H1 (cell line): ENCODE measurements at regions of chr5 and their contacts with region 1.

Region 1: GRCh38 chr5:38265546-38266179 is 7.3 kb downstream of the EGFLAM start:
- DNase-seq: peak in 1 of 2 experiments; percentile 91
- H3K4me3 ChIP-seq: 0 out of 8 replicates have a peak overlapping the region, but pooled peaks of 1 of the 4 experiments have one; percentile 27
- H3K27ac ChIP-seq: no peak overlapping the region
- H3K4me1 ChIP-seq: peaks cover 0 to 4% (median 0%) of the 10 kb centered on the region in 4 experiments; a peak in 1 of 7 replicates
- H3K27me3 ChIP-seq: peaks cover 0 to 20% (median 7%) of the 10 kb centered on the region in 4 experiments; a peak in 6 of 7 replicates
- CTCF ChIP-seq: peak; percentile 52 to 72 (median 69)
- EP300 ChIP-seq: no peak
- POLR2A ChIP-seq: no peak
- RAD21 ChIP-seq: peak; percentile 58 to 66

Region 2: GRCh38 chr5:38237681-38238080 is 28.0 kb before region 1 on chr5:
- CTCF ChIA-PET with region 1: interaction called, 10 read pairs
- POLR2A ChIA-PET with region 1: no interaction called
- DNase-seq: no peak
- H3K4me3 ChIP-seq: no peak overlapping the region
- H3K27ac ChIP-seq: no peak overlapping the region
- H3K4me1 ChIP-seq: no peaks in the 10 kb centered on the region
- H3K27me3 ChIP-seq: no peaks in the 10 kb centered on the region
- CTCF ChIP-seq: no peak
- EP300 ChIP-seq: no peak
- POLR2A ChIP-seq: no peak
- RAD21 ChIP-seq: no peak

Region 3: DNA sequence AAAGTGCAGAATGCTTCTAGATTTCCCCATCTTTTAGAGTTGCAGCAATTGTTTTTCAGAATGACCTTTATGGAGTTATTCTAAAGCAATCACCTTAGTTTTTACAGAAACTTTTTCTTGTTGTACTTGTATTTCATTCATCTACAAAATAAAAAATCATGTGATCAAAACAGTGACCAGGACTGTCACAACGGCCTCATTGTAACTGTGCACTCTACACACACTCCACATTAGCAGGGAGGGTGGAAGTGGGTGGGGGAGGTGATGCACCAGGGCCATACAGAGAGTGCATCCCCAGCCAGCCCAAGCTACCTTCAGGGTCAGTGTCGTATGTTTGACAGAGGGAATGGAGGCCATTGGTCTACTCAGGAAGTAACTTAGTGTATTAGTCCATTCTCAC is 19.6 kb after region 1 on chr5:
- CTCF ChIA-PET with region 1: interaction called, 24 read pairs
- POLR2A ChIA-PET with region 1: no interaction called
- DNase-seq: no peak
- H3K4me3 ChIP-seq: no peak overlapping the region
- H3K27ac ChIP-seq: no peak overlapping the region
- H3K4me1 ChIP-seq: no peaks in the 10 kb centered on the region
- H3K27me3 ChIP-seq: no peaks in the 10 kb centered on the region
- CTCF ChIP-seq: no peak
- EP300 ChIP-seq: no peak
- POLR2A ChIP-seq: no peak
- RAD21 ChIP-seq: no peak

Region 4: DNA sequence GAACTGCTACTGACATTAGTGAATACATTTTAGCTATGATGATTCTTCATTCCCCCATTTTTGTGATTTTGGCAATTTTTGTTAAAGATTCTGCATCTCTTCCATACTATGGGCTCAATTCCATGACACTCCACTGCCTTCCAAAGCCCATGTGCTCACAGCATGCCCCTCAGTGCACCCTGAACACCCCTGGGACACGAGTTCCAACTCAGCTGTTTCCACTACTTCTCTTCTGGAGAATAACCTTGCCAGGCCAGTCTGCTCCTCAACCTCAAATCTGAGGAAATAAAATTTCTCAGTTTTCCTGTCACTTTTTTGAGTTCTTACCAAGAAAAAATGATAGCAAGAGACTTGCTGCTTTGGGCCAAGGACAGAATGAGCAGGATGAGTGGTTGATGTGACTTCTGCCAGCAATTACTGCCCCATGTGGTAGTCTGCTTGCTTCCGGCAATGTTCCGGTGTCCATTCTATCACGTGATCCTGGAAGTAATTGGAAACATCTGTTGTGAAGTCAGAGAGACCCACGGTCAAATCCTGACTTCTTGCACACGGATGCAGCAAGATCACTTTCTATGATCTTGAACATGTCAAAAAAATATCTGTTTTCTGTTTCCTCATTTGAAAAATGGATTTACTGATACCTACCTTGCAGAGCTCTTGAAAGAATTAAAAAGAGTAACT is 51.0 kb after region 1 on chr5:
- CTCF ChIA-PET with region 1: interaction called, 11 read pairs
- POLR2A ChIA-PET with region 1: no interaction called
- DNase-seq: no peak
- H3K4me3 ChIP-seq: no peak overlapping the region
- H3K27ac ChIP-seq: no peak overlapping the region
- H3K4me1 ChIP-seq: no peaks in the 10 kb centered on the region
- H3K27me3 ChIP-seq: no peaks in the 10 kb centered on the region
- CTCF ChIP-seq: no peak
- EP300 ChIP-seq: no peak
- POLR2A ChIP-seq: no peak
- RAD21 ChIP-seq: no peak

Region 5: DNA sequence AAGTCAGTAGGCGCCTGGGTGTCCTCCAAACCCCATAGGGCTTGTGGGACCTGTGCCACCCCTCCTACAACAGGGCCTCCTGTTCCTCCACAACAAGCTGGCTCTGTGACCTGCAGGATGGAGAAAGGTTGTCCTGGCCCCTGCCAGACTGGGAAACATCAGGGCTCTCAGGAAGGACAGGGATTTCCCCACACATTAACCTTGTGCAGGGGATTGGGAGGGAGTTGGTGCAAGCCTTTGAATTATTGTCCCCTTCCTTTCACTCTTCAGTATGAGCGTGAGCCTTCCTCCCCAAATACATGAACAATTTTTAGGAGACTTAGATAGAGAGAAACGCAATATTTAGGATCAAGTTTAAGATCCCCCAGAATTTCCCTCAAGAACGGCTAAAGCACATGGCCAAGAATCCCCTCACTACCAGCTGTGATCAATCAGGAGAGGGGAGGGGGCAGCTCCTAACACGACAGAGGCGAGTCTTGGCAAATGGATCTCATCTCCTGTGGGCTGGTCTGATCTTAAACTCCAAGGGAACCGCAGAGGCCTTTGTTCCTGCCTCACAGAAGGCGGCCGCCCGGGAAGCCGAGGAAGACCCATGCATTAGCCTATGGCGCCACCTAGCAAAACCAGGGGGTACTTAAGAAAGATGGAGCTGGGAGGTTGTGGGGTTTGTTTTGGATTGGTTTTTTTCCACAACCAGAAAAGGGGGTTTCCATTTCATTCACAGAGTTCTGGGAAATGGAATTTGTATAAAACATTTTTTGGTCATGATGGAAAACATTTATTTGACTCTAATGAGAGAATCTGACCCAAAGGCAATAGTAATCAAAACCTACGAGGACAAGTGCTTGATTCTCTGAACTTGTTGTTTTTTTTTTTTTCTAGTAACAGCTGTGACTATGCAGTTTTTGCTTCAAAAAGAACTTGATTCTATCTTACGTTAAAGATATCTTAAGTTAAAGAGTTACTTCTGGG is 544.0 kb after region 1 on chr5:
- CTCF ChIA-PET with region 1: interaction called, 16 read pairs
- POLR2A ChIA-PET with region 1: no interaction called
- DNase-seq: peak; percentile 60 to 84
- H3K4me3 ChIP-seq: no peak overlapping the region
- H3K27ac ChIP-seq: no peak overlapping the region
- H3K4me1 ChIP-seq: peaks cover 0 to 3% (median 0%) of the 10 kb centered on the region in 4 experiments; a peak in 2 of 7 replicates
- H3K27me3 ChIP-seq: peaks cover 0 to 3% (median 0%) of the 10 kb centered on the region in 4 experiments; a peak in 2 of 7 replicates
- CTCF ChIP-seq: peak; percentile 59 to 92 (median 80)
- EP300 ChIP-seq: no peak
- POLR2A ChIP-seq: no peak
- RAD21 ChIP-seq: peak; percentile 97 to 99